Activated CD4-positive, alpha-beta T cell treated with anti-CD3 and anti-CD28 coated beads for 36 hours (primary cell): ENCODE measurements at regions of chr9 and their contacts with region 1.

Region 1: GRCh38 chr9:96449845-96450612 is at the start of gene HABP4:
- DNase-seq: peak; percentile 98
- ATAC-seq: peak; percentile 96
- H3K4me3 Mint-ChIP-seq: peak within 1 kb of the TSS; percentile 84
- H3K27ac Mint-ChIP-seq: peak within 1 kb of the TSS; percentile 73
- H3K4me1 Mint-ChIP-seq: peaks cover 24% of the 10 kb centered on the region
- H3K27me3 Mint-ChIP-seq: peaks cover 9% of the 10 kb centered on the region
- total RNA-seq, gene HABP4: 5.8 to 7.3 TPM

Region 2: DNA sequence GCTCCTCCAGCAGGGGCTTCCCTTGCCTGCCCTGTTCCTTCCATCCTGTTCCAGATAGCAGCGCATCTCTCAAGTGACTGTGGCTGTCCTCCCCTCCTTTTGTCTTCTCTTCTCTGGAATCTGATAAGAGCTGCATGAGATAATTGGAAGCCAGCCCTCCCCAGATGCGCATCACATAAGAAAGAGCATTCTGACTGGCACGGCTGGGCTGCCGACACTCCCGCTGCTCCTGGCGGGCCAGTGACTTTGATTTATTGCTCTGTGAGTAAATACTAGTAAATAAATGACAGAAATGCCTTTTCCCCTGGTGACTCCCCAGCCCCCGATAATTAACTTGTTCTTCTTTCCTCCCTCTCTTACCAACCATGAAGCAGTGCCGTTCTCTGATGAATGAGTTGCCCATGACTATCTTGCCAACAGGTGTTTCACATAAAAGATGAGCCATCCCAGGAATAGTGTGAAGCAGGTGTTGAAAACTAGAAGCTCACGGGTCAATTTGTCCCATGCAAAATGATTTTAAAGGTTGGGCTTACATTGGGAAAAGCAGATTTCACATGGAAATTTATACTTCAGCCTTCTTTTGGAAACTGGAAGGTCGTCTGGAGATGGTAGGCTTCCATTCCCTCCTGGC is 362.2 kb before region 1 on chr9:
- CTCF ChIA-PET with region 1: no interaction called
- POLR2A ChIA-PET with region 1: no interaction called
- intact Hi-C with region 1: no loop called
- DNase-seq: no peak
- ATAC-seq: no peak
- H3K4me3 Mint-ChIP-seq: no peak overlapping the region
- H3K27ac Mint-ChIP-seq: no peak overlapping the region
- H3K4me1 Mint-ChIP-seq: no peaks in the 10 kb centered on the region
- H3K27me3 Mint-ChIP-seq: peaks cover 9% of the 10 kb centered on the region

Region 3: GRCh38 chr9:96478829-96479371 is 28.9 kb after region 1 on chr9:
- CTCF ChIA-PET with region 1: interaction called, 7 read pairs
- POLR2A ChIA-PET with region 1: no interaction called
- intact Hi-C with region 1: loop called in 1 of 2 experiments (anchors 1 kb)
- DNase-seq: peak; percentile 59
- ATAC-seq: peak; percentile 83
- H3K4me3 Mint-ChIP-seq: no peak overlapping the region
- H3K27ac Mint-ChIP-seq: peak overlapping the region; percentile 72
- H3K4me1 Mint-ChIP-seq: peaks cover 28% of the 10 kb centered on the region
- H3K27me3 Mint-ChIP-seq: no peaks in the 10 kb centered on the region

Region 4: GRCh38 chr9:96566498-96567207 is 116.6 kb after region 1 on chr9:
- CTCF ChIA-PET with region 1: interaction called, 8 read pairs
- POLR2A ChIA-PET with region 1: interaction called, 5 read pairs
- intact Hi-C with region 1: loop called (anchors 1 to 5 kb)
- DNase-seq: peak; percentile 85
- ATAC-seq: peak; percentile 78
- H3K4me3 Mint-ChIP-seq: peak overlapping the region; percentile 66
- H3K27ac Mint-ChIP-seq: peak overlapping the region; percentile 82
- H3K4me1 Mint-ChIP-seq: peaks cover 27% of the 10 kb centered on the region
- H3K27me3 Mint-ChIP-seq: peaks cover 2% of the 10 kb centered on the region

Region 5: DNA sequence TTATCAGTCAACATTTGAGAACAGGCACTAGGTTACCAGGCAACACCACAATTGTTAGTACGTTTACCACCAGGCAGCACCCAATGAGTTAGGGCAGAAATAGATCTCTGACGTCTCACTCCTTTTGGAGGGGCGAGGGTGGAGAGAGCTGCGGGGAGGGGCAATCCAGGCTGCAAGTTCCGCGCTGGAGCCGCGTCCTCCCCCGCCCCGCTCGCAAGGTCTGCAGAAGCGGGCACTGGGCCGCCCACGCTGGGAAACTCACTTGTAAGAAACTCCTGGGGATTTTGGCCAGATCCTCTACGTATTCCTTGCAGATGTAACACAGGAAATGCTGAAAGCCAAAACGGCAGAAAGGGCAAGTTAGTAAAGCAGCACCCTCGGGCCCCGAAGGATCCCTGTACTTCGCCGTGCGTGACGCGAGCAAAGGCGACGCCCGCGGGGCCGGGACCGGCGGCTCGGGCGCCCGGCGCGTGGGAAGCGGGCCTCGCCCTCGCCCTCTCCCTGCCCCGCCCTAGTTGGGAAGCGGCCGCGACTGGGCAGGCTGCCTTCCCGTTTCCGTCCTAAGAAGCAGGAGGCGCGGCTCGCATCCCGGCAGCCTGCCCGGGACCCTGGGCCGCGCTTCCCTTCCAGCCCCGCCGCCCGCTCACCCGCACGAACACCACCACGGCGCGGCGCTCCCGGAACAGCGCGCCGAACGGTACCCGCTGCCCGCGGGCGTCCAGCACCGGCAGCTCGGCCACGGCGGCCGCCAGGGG is 204.6 kb after region 1 on chr9:
- CTCF ChIA-PET with region 1: interaction called, 4 read pairs
- POLR2A ChIA-PET with region 1: interaction called, 3 read pairs
- intact Hi-C with region 1: loop called in 1 of 2 experiments (anchors 1 kb)
- DNase-seq: peak; percentile 78
- ATAC-seq: peak; percentile 69
- H3K4me3 Mint-ChIP-seq: peak overlapping the region; percentile 78
- H3K27ac Mint-ChIP-seq: peak overlapping the region; percentile 78
- H3K4me1 Mint-ChIP-seq: peaks cover 15% of the 10 kb centered on the region
- H3K27me3 Mint-ChIP-seq: no peaks in the 10 kb centered on the region